A549 (cell line): ENCODE measurements at regions of chr1 and their contacts with region 1.

Region 1: GRCh38 chr1:209435654-209436566 is 147.6 kb upstream of the CAMK1G start:
- DNase-seq: peak; percentile 77 to 92
- ATAC-seq: peak; percentile 95 to 99
- H3K4me3 ChIP-seq: no peak overlapping the region
- H3K27ac ChIP-seq: peak overlapping the region; percentile 29 to 63; a peak in 5 of 6 replicates
- H3K4me1 ChIP-seq: peaks cover 22% of the 10 kb centered on the region
- CTCF ChIP-seq: peak; percentile 83
- EP300 ChIP-seq: no peak
- POLR2A ChIP-seq: no peak
- RAD21 ChIP-seq: peak; percentile 91 to 92

Region 2: DNA sequence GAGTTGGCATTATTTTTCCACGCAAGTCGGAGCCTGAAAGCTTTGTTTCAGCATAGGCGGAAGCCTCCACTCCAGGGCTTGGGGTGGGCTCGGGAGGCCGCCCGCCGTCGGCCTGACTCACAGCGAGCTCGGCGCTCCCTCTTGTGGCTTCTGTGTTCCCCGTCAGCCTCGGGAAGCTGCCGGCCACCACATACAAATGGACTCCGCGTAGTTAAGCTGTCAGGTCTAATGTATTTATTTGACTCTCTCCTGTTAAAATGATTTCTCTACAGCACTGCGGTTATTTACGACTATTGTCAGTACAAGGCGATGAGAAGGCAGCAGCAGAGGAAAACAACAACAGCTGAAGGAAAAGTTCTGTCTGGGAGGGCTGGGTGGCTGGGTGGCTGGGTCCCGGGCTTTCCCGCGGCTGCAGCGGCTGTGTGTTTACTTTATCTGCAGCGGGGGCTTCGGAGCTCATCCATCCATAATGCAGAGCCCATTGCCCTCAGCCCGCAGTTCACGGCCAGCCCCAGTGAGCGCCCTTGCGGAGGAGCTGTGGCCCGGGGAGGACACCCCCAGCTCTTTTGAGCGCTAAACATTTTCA is 228.1 kb before region 1 on chr1:
- CTCF ChIA-PET with region 1: interaction called, 13 read pairs
- POLR2A ChIA-PET with region 1: no interaction called
- DNase-seq: peak; percentile 38 to 45
- ATAC-seq: peak; percentile 91 to 97
- H3K4me3 ChIP-seq: peak overlapping the region; percentile 22; the same call in 1 of the 3 replicates
- H3K27ac ChIP-seq: peak overlapping the region in 1 of 2 experiments; percentile 63; a peak in 3 of 6 replicates
- H3K4me1 ChIP-seq: no peaks in the 10 kb centered on the region
- CTCF ChIP-seq: peak; percentile 74
- EP300 ChIP-seq: no peak
- POLR2A ChIP-seq: no peak
- RAD21 ChIP-seq: peak; percentile 74 to 84